PC-3 (cell line): ENCODE measurements at regions of chr7 and their contacts with region 1.

Region 1: DNA sequence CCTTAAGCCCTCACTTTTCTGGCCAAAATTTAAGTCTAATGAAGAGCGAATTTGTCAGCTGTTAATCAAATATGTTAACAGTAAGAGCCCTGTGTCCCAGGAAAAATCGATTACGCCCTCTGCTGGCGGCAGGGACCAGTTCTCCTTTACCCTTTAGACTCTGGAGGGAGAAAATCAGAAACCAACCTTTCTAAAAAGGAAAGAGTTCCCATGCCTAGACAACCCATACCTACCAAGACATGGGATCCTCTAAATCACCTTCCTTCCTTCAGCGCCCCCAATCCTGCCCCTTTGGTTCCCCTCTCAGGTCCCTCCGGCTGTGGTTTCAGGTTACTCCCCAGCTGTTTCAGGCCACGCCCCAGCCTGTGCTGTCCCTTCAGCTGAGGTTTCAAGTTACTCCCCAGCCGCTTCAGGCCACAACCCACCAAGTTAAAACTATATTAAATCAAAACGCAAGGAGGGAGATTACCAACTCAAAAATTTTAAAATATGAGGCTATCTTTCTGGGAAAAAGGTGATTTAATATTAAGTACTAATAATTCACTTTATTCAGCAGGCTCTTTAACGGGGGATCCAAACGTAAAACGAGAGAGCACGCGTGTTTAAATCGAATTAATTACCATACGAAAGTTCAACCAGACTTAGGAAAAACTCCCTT is 1.4 kb upstream of the AKR1B15 start:
- DNase-seq: peak; percentile 74
- ATAC-seq: peak; percentile 94
- H3K4me3 ChIP-seq: peak overlapping the region; percentile 62
- H3K27ac ChIP-seq: peak overlapping the region; percentile 43
- H3K4me1 ChIP-seq: peaks cover 28% of the 10 kb centered on the region
- H3K27me3 ChIP-seq: no peaks in the 10 kb centered on the region
- CTCF ChIP-seq: peak; percentile 96

Region 2: GRCh38 chr7:134520130-134520529 is 27.4 kb before region 1 on chr7:
- CTCF ChIA-PET with region 1: no interaction called
- POLR2A ChIA-PET with region 1: no interaction called
- intact Hi-C with region 1: loop called (anchors 1 kb)
- DNase-seq: peak; percentile 42
- ATAC-seq: no peak; the same call in 1 of the 2 replicates
- H3K4me3 ChIP-seq: peak overlapping the region; percentile 60
- H3K27ac ChIP-seq: no peak overlapping the region
- H3K4me1 ChIP-seq: peaks cover 37% of the 10 kb centered on the region
- H3K27me3 ChIP-seq: no peaks in the 10 kb centered on the region
- CTCF ChIP-seq: no peak; the same call in 1 of the 2 replicates

Region 3: DNA sequence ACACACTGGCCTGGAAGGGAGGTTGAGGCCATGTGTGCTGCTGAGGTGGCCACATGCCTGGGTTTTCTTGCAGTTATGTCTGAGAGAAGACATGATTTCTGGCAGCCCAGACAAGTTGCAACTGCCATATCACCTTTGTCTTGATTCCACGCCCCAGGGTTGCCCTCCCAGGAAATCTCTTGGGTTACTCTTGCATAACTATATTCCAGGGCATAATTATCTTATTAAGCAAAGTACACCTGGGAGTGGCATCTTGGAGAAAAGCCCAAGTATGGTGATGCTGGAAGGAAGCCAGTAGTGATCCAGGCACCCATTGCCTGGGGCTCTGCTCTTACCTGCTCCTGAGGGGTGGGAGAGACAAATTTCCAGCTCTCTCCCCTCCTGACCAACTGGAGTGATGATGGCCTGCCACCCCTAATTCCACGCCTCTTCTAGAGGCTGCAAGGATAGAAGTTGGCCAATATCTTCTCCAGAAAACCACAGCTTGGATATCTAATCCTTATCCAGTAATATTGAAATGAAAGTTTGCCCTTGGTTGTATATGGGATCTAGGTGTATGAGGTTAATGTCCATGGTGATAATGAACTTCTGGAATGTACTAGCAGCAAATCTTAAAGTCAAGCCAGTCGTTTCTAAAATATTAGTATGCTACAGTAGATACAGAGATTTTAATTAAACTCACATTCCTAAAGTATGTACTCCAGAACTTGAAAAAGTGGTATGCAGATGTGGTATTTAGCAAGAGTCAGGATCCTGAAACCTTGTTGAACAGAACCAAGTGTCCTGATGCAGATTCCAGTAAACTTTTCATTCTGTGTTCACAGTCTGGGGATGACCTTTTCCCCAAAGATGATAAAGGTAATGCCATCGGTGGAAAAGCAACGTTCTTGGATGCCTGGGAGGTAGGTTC is 15.1 kb before region 1 on chr7:
- CTCF ChIA-PET with region 1: interaction called, 4 read pairs
- POLR2A ChIA-PET with region 1: no interaction called
- intact Hi-C with region 1: loop called (anchors 1 kb)
- DNase-seq: peak; percentile 75
- ATAC-seq: peak; percentile 15
- H3K4me3 ChIP-seq: no peak overlapping the region
- H3K27ac ChIP-seq: peak overlapping the region; percentile 75
- H3K4me1 ChIP-seq: peaks cover 47% of the 10 kb centered on the region
- H3K27me3 ChIP-seq: no peaks in the 10 kb centered on the region
- CTCF ChIP-seq: no peak

Region 4: DNA sequence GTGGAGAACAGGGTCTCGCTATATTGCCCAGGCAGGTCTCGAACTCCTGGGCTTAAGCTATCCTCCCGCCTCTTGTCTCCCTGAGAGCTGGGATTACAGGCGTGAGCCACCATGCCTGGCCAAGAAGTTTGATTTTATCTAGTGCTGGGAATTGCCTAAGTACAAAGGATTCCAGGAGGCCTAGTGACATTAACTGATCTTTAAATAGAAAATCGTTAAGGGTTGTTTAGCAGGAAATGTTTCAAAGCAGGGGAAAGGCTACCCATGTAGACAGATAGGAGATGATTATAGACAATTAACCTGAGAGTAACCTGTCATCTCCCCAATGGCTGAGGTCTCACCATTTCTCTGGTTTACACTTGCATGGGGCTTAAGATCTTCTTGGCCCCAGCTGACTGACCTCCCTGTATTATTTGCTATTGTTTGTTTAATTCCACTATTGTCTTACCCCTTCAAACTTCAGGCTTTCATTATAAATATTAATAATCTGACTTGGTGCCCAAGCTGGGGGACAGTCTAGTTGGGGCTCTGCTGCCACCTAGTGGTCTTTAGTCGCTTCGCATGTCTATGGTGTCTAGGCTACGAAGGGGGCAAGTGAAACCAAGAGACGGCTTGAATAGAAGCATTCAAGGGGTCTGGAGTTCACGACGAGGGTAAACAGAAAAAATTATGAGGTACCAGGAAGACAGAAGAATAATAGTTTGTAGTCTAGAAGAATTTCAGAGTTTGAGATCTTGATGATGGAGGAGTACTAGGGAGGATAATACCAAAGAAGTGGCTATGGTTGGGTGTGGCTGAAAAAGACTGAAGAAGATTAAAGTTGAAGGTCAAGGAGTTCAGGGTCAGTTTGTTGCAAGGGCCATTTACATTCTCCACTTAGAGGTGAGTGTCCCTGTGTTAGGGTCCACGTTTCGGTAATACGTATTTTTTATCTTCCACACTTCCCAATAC is 58.7 kb after region 1 on chr7:
- CTCF ChIA-PET with region 1: interaction called, 3 read pairs
- POLR2A ChIA-PET with region 1: no interaction called
- intact Hi-C with region 1: loop called (anchors 1 kb)
- DNase-seq: peak; percentile 78
- ATAC-seq: peak; percentile 96
- H3K4me3 ChIP-seq: peak overlapping the region; percentile 24; the same call in 1 of the 2 replicates
- H3K27ac ChIP-seq: peak overlapping the region; percentile 56
- H3K4me1 ChIP-seq: peaks cover 11% of the 10 kb centered on the region
- H3K27me3 ChIP-seq: no peaks in the 10 kb centered on the region
- CTCF ChIP-seq: peak; percentile 96